ENCODE measurements at regions of chr5 and their contacts with region 1.

Region 1: DNA sequence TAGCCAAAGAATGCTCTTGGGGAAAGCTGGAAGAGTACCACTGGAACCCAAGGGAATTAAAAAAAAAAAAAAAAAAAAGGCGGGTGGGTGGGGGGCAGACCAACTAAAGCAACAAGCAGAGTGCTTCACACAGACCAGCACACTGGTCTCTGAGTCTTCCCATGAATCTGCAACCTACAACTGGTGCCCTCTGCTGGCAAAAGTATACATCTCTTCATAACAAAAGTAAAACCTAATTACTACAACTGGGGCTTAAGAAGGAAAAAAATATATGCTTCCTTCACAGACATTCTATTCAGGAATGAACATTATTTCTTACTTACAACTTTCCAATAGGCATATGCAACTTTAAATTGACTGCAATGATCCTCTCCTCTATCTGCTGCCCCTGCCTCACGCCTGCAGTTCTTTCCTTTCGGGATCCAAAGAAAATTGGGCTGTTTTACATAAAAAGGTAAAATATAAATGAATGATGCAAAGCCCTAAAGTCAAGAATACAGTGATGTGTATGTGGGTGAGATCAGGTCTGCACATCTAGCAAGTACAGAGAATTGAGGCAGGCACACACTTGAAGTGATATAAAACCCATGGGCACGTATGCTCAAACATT is 7.2 kb upstream of the KLHL3 start:
- DNase-seq: peak in 8 of 9 experiments; percentile 43 to 85 (median 64)
- ATAC-seq: peak; percentile 95
- H3K4me3 ChIP-seq: no peak overlapping the region
- H3K4me3 Mint-ChIP-seq: no peak overlapping the region
- H3K27ac ChIP-seq: no peak overlapping the region
- H3K27ac Mint-ChIP-seq: no peak overlapping the region
- H3K4me1 ChIP-seq: peaks cover 17% of the 10 kb centered on the region
- H3K4me1 Mint-ChIP-seq: peaks cover 17% of the 10 kb centered on the region
- H3K27me3 ChIP-seq: no peaks in the 10 kb centered on the region
- H3K27me3 Mint-ChIP-seq: no peaks in the 10 kb centered on the region
- CTCF ChIP-seq: peak; percentile 74

Region 2: DNA sequence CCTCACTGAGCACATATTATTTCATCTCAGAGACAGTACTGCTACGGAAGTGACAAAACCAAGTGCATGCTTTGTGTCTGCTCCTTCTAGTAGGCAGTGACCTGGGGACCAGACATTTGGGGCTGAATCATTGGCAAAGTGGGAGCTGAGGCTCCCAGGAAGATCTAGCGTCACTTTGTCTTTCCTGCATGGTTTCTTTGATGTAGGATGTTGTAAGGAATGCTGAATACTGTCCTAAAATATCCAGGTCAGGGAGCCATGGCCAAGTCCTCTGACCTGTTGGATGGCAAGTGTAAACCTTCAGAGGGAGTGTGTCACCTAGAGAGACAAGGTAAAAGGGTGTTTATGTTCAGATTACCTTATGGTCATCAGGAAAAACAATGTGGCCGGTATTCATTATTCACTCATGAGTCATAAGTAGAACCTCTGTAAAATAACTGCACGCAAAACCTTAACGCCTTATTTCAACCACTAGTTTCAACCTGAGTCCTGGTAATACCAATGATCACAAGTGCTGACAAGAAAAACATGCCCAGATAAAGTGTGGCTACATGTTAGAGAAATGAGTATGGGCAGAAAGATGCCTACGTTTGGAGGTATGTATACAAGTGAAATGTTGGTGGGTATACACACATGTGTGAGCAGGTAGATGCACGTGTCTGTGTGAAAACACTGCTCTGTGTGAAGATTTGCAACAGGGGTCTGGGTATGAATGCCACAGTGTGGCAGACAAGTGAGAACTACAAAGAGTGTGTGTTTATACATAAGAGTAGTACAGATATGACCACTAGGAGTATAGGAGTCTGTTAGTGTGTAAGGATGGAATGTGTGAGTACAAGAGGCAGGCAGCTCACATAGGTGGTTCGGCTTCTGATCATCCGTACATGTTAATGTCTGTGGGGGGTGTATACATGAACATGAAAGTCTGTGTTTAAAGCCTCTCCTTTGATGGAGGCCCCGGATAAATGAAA is 507.9 kb before region 1 on chr5:
- CTCF ChIA-PET with region 1: no interaction called
- POLR2A ChIA-PET with region 1: no interaction called
- intact Hi-C with region 1: no loop called
- DNase-seq: no peak
- ATAC-seq: no peak
- H3K4me3 ChIP-seq: no peak overlapping the region
- H3K4me3 Mint-ChIP-seq: no peak overlapping the region
- H3K27ac ChIP-seq: no peak overlapping the region
- H3K27ac Mint-ChIP-seq: no peak overlapping the region
- H3K4me1 ChIP-seq: no peaks in the 10 kb centered on the region
- H3K4me1 Mint-ChIP-seq: no peaks in the 10 kb centered on the region
- H3K27me3 ChIP-seq: no peaks in the 10 kb centered on the region
- H3K27me3 Mint-ChIP-seq: peaks cover 22% of the 10 kb centered on the region
- CTCF ChIP-seq: no peak

Region 3: GRCh38 chr5:137629646-137630045 is 113.5 kb before region 1 on chr5:
- CTCF ChIA-PET with region 1: interaction called, 90 read pairs
- POLR2A ChIA-PET with region 1: interaction called, 4 read pairs
- intact Hi-C with region 1: loop called (anchors 1 kb)
- DNase-seq: peak in 3 of 9 experiments; percentile 13 to 69 (median 58)
- ATAC-seq: peak; percentile 71
- H3K4me3 ChIP-seq: no peak overlapping the region
- H3K4me3 Mint-ChIP-seq: no peak overlapping the region
- H3K27ac ChIP-seq: no peak overlapping the region
- H3K27ac Mint-ChIP-seq: no peak overlapping the region
- H3K4me1 ChIP-seq: no peaks in the 10 kb centered on the region
- H3K4me1 Mint-ChIP-seq: no peaks in the 10 kb centered on the region
- H3K27me3 ChIP-seq: no peaks in the 10 kb centered on the region
- H3K27me3 Mint-ChIP-seq: no peaks in the 10 kb centered on the region
- CTCF ChIP-seq: peak; percentile 96

Region 4: DNA sequence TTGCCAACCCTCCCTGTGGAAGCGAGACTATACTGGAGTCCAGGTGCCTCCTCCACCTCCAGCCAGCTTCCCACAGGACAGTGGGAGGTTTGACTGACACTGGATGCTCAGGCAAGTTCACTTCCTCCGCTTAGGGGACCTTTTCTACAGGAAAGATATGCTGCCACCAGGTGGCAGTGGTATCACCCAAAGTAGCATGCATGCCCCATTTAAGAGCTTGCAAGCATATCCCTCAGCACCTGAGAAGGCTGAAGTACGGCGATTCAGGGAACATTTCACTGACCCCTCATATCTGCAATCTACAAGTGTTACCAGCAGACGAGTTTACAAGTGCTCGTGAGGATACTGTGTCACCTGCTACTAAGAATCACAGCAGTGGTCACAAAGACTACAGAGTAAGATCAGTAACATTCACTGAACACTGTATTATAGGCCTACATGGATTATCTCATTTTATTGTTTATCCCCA is 82.8 kb before region 1 on chr5:
- CTCF ChIA-PET with region 1: interaction called, 652 read pairs
- POLR2A ChIA-PET with region 1: interaction called, 22 read pairs
- intact Hi-C with region 1: loop called (anchors 1 kb)
- DNase-seq: peak; percentile 37 to 84 (median 74)
- ATAC-seq: peak; percentile 94
- H3K4me3 ChIP-seq: no peak overlapping the region
- H3K4me3 Mint-ChIP-seq: no peak overlapping the region
- H3K27ac ChIP-seq: no peak overlapping the region
- H3K27ac Mint-ChIP-seq: no peak overlapping the region
- H3K4me1 ChIP-seq: no peaks in the 10 kb centered on the region
- H3K4me1 Mint-ChIP-seq: peaks cover 11% of the 10 kb centered on the region
- H3K27me3 ChIP-seq: no peaks in the 10 kb centered on the region
- H3K27me3 Mint-ChIP-seq: no peaks in the 10 kb centered on the region
- CTCF ChIP-seq: peak; percentile 75

Region 5: GRCh38 chr5:137684761-137685160 is 58.4 kb before region 1 on chr5:
- CTCF ChIA-PET with region 1: interaction called, 12 read pairs
- POLR2A ChIA-PET with region 1: no interaction called
- intact Hi-C with region 1: no loop called
- DNase-seq: no peak
- ATAC-seq: no peak
- H3K4me3 ChIP-seq: no peak overlapping the region
- H3K4me3 Mint-ChIP-seq: no peak overlapping the region
- H3K27ac ChIP-seq: no peak overlapping the region
- H3K27ac Mint-ChIP-seq: no peak overlapping the region
- H3K4me1 ChIP-seq: no peaks in the 10 kb centered on the region
- H3K4me1 Mint-ChIP-seq: peaks cover 2% of the 10 kb centered on the region
- H3K27me3 ChIP-seq: no peaks in the 10 kb centered on the region
- H3K27me3 Mint-ChIP-seq: no peaks in the 10 kb centered on the region
- CTCF ChIP-seq: no peak

Region 6: DNA sequence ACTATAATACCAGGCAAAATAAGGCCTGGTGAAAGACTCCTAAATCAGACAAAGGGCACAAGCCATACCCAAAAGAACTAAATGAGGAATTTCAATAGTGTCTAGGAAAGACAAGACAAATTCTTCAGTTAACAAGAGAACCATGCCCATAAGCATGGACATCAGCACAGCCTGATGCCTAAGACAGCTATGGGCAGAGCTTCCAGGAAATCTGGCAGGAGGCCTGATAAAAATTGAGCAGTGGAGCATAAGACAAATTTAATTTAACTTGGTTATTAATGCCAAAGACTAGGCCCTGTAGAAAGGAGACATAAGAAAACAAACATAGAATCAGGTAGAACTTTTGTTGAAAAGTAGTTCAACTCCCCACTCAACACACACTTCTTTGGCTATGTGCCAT is 24.5 kb before region 1 on chr5:
- CTCF ChIA-PET with region 1: interaction called, 16 read pairs
- POLR2A ChIA-PET with region 1: no interaction called
- intact Hi-C with region 1: no loop called
- DNase-seq: no peak
- ATAC-seq: no peak
- H3K4me3 ChIP-seq: no peak overlapping the region
- H3K4me3 Mint-ChIP-seq: no peak overlapping the region
- H3K27ac ChIP-seq: no peak overlapping the region
- H3K27ac Mint-ChIP-seq: no peak overlapping the region
- H3K4me1 ChIP-seq: no peaks in the 10 kb centered on the region
- H3K4me1 Mint-ChIP-seq: peaks cover 7% of the 10 kb centered on the region
- H3K27me3 ChIP-seq: no peaks in the 10 kb centered on the region
- H3K27me3 Mint-ChIP-seq: no peaks in the 10 kb centered on the region
- CTCF ChIP-seq: no peak

Region 7: GRCh38 chr5:138354926-138355378 is 611.8 kb after region 1 on chr5:
- CTCF ChIA-PET with region 1: no interaction called
- POLR2A ChIA-PET with region 1: no interaction called
- intact Hi-C with region 1: no loop called
- DNase-seq: peak in 6 of 9 experiments; percentile 11 to 85 (median 56)
- ATAC-seq: peak; percentile 39
- H3K4me3 ChIP-seq: peak overlapping the region; percentile 87 to 97
- H3K4me3 Mint-ChIP-seq: peak overlapping the region; percentile 97
- H3K27ac ChIP-seq: peak overlapping the region in 1 of 2 experiments; percentile 89
- H3K27ac Mint-ChIP-seq: peak overlapping the region; percentile 97
- H3K4me1 ChIP-seq: peaks cover 34% of the 10 kb centered on the region
- H3K4me1 Mint-ChIP-seq: peaks cover 55% of the 10 kb centered on the region
- H3K27me3 ChIP-seq: no peaks in the 10 kb centered on the region
- H3K27me3 Mint-ChIP-seq: no peaks in the 10 kb centered on the region
- CTCF ChIP-seq: no peak

Measured in CD8-positive, alpha-beta T cell (primary cell).